ENCODE measurements at regions of chr4 and their contacts with region 1.

Region 1: DNA sequence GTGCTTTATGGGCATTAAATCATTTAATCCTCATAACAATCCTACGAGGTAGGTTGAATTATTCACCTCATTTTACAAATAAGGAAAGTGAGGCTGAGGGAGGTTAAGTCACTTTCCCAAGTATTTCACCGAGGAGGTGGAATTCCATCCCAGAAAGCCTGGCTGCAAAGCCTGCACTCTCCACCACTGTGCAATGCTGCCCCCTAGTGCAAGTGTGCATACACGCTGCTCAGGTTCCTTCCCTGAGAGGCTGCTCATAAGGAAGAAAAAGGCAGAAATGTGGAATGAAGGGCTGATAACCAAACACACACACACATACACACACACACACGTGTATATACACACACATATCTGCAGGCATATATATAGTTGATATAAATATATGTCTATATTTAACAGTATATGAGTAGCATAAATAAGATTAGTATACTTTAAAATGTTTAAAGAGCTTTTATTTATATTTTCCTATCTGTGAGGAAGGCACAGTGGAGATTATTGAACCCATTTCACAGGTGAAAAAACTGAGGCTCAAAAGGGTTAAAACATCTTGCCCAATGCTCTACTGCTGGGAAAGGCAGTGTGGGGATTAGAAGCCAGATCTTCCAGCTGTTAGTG is 714.5 kb upstream of the TENM3 start:
- DNase-seq: peak; percentile 68
- ATAC-seq: peak; percentile 82

Region 2: DNA sequence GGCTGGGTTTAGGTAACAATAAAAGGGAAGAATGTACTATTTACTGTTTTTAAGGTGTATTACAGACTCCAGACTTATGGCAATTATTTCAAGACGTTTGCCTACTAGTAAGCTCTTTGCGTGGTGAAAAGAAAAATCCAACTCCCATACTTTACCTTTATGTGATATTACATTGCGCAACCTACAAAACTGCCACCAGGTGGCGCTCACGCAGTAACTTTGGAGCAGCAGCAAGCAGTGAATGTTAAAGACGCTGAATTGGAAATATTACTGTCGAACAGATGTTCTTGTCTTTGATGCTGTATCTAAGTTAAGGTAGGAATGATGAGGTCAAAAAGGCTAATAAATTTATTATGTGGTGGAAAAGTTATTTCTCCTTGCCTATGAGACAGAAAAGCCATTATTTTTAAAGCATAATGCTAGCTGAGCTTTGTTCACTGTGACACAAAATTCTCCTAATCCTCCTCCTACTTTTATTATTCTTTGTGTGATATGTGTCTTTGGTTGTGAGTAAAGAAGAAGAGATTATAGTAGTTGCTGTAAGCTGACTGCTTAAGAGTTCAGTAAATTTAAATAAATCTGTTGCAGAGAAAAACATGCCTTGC is 385.3 kb before region 1 on chr4:
- intact Hi-C with region 1: loop called (anchors 2 kb)
- DNase-seq: peak; percentile 83
- ATAC-seq: peak; percentile 62

Region 3: GRCh38 chr4:181261279-181261678 is 267.4 kb before region 1 on chr4:
- intact Hi-C with region 1: loop called (anchors 5 kb)
- DNase-seq: no peak
- ATAC-seq: peak; percentile 50

Measured in left ventricle myocardium superior (tissue), 1 donor.